Mammary epithelial cell (primary cell): ENCODE measurements at regions of chr11 and their contacts with region 1.

Region 1: GRCh38 chr11:64341851-64342791 is 2.1 kb downstream of the CCDC88B start:
- DNase-seq: peak; percentile 91
- H3K4me3 ChIP-seq: peak overlapping the region; percentile 13 to 57 (median 26)
- H3K27ac ChIP-seq: peak overlapping the region; percentile 53
- H3K4me1 ChIP-seq: peaks cover 15% of the 10 kb centered on the region
- H3K27me3 ChIP-seq: no peaks in the 10 kb centered on the region
- CTCF ChIP-seq: peak; percentile 11 to 64

Region 2: GRCh38 chr11:64225612-64226506 is 116.3 kb before region 1 on chr11 and contains the starts of genes NUDT22 and TRPT1:
- CTCF ChIA-PET with region 1: no interaction called
- dilution Hi-C with region 1: no loop called
- in situ Hi-C with region 1: no loop called
- intact Hi-C with region 1: no loop called
- DNase-seq: peak; percentile 75
- H3K4me3 ChIP-seq: peak within 1 kb of the TSS; percentile 60 to 94 (median 82)
- H3K27ac ChIP-seq: no peak within 1 kb of the TSS
- H3K4me1 ChIP-seq: peaks cover 51% of the 10 kb centered on the region
- H3K27me3 ChIP-seq: no peaks in the 10 kb centered on the region
- CTCF ChIP-seq: peak; percentile 17 to 55
- total RNA-seq, gene NUDT22: 52.5 to 64.7 TPM
- total RNA-seq, gene TRPT1: 21.5 to 36.0 TPM

Region 3: DNA sequence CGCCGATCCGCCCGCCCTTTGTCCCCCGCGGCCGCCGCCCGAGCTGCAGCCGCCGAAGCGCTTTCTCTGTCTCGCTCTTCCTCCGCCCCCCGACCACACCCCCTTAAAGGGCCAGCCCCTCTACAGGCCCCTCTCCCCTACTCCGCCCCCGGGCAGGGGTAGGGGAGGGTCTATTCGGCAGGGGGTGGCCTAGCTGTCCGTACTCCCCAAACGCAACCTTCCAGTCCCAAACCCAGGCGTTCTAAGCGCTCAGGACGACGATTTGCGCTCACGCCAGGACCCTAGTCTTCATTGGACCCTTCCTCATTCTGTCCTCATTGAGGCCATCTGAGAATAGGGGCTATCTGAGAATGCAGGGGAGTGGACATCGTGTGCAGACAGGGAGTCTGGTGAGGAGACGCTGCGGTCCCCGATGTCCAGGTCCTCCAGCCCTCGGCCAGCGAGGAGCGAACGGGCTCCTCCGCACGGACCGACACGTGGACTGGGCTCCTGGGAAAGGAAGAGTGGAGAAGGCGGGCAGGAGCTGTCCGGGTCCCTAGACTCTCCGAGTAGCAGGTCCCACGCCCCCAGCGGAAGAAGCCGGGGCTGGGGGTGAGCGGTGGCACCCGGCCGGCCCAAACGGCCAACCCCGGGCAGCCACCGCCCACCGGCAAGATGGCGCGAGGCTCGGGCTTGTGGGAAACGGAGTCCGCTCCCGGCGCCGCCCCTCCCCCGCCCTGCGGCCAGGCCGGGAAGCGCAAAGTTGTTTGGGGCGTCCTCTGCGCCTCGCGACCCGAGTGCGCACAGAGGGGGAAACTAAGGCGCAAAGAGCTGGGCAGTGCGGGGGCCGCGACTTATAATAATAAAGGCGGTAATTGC is 95.0 kb before region 1 on chr11 and contains the start of gene PPP1R14B:
- CTCF ChIA-PET with region 1: no interaction called
- dilution Hi-C with region 1: no loop called
- in situ Hi-C with region 1: no loop called
- intact Hi-C with region 1: loop called (anchors 5 kb)
- DNase-seq: peak; percentile 81
- H3K4me3 ChIP-seq: peak within 1 kb of the TSS; percentile 79 to 84 (median 82)
- H3K27ac ChIP-seq: peak within 1 kb of the TSS; percentile 77
- H3K4me1 ChIP-seq: peaks cover 41% of the 10 kb centered on the region
- H3K27me3 ChIP-seq: no peaks in the 10 kb centered on the region
- CTCF ChIP-seq: peak in 1 of 2 donors; percentile 15
- total RNA-seq, gene PPP1R14B: 118 to 362 TPM

Region 4: GRCh38 chr11:64269380-64270234 is 72.5 kb before region 1 on chr11:
- CTCF ChIA-PET with region 1: no interaction called
- dilution Hi-C with region 1: no loop called
- in situ Hi-C with region 1: no loop called
- intact Hi-C with region 1: no loop called
- DNase-seq: peak; percentile 99
- H3K4me3 ChIP-seq: peak overlapping the region; percentile 57 to 70 (median 59)
- H3K27ac ChIP-seq: peak overlapping the region; percentile 62
- H3K4me1 ChIP-seq: peaks cover 41% of the 10 kb centered on the region
- H3K27me3 ChIP-seq: no peaks in the 10 kb centered on the region
- CTCF ChIP-seq: peak in 1 of 2 donors; percentile 24

Region 5: GRCh38 chr11:64372802-64373597 is 30.9 kb after region 1 on chr11:
- CTCF ChIA-PET with region 1: no interaction called
- dilution Hi-C with region 1: no loop called
- in situ Hi-C with region 1: no loop called
- intact Hi-C with region 1: no loop called
- DNase-seq: no peak
- H3K4me3 ChIP-seq: no peak overlapping the region
- H3K27ac ChIP-seq: no peak overlapping the region
- H3K4me1 ChIP-seq: no peaks in the 10 kb centered on the region
- H3K27me3 ChIP-seq: no peaks in the 10 kb centered on the region
- CTCF ChIP-seq: no peak